Activated CD8-positive, alpha-beta T cell treated with anti-CD3 and anti-CD28 coated beads for 36 hours (primary cell): ENCODE measurements at regions of chr11 and their contacts with region 1.

Region 1: DNA sequence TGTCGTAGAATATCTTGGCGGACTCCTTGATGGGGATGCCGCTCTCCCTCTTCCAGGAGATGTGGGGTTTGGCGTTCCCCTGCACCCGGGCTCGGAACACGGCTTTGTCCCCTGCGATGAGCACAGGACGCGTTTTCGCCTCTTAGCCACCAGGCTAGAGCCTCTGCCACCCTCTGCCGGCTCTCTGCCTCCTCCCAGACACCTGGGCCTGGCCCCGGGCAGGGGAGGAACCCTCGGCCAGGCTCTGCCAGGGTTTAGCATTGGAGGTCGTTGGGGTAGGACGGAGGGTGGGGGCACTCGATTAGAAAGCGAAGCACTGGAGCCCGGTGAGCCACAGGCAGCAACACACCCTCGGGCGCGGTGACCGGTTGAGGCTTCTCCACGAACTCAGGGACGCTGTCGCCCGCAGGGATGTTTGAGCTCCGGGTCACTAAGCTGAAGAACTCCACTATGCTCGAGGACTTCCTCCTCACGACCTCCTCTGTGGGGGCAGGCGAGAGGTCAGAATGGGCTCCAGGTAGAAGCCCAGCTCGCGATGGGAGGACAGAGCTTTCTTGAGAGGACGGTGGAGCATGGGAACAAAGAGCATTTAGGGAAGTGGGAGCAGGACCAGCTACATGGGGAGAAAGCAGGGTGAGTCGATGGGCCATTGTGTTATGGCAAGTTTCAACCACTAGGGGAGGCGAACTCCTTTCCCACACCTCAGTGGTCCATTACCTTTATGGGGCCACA is 4.3 kb downstream of the IGSF22 start:
- DNase-seq: peak; percentile 71
- ATAC-seq: peak; percentile 66
- H3K4me3 Mint-ChIP-seq: peak overlapping the region; percentile 76
- H3K27ac Mint-ChIP-seq: peak overlapping the region; percentile 67
- H3K4me1 Mint-ChIP-seq: no peaks in the 10 kb centered on the region
- H3K27me3 Mint-ChIP-seq: no peaks in the 10 kb centered on the region
- CTCF ChIP-seq: peak; percentile 94

Region 2: GRCh38 chr11:18540207-18541009 is 181.3 kb before region 1 on chr11:
- CTCF ChIA-PET with region 1: interaction called, 20 read pairs
- POLR2A ChIA-PET with region 1: no interaction called
- intact Hi-C with region 1: no loop called
- DNase-seq: no peak
- ATAC-seq: peak; percentile 78
- H3K4me3 Mint-ChIP-seq: no peak overlapping the region
- H3K27ac Mint-ChIP-seq: no peak overlapping the region
- H3K4me1 Mint-ChIP-seq: no peaks in the 10 kb centered on the region
- H3K27me3 Mint-ChIP-seq: no peaks in the 10 kb centered on the region
- CTCF ChIP-seq: peak; percentile 70

Region 3: GRCh38 chr11:18564149-18564548 is 157.6 kb before region 1 on chr11:
- CTCF ChIA-PET with region 1: no interaction called
- POLR2A ChIA-PET with region 1: no interaction called
- intact Hi-C with region 1: no loop called
- DNase-seq: no peak
- ATAC-seq: no peak
- H3K4me3 Mint-ChIP-seq: no peak overlapping the region
- H3K27ac Mint-ChIP-seq: no peak overlapping the region
- H3K4me1 Mint-ChIP-seq: no peaks in the 10 kb centered on the region
- H3K27me3 Mint-ChIP-seq: no peaks in the 10 kb centered on the region
- CTCF ChIP-seq: no peak

Region 4: DNA sequence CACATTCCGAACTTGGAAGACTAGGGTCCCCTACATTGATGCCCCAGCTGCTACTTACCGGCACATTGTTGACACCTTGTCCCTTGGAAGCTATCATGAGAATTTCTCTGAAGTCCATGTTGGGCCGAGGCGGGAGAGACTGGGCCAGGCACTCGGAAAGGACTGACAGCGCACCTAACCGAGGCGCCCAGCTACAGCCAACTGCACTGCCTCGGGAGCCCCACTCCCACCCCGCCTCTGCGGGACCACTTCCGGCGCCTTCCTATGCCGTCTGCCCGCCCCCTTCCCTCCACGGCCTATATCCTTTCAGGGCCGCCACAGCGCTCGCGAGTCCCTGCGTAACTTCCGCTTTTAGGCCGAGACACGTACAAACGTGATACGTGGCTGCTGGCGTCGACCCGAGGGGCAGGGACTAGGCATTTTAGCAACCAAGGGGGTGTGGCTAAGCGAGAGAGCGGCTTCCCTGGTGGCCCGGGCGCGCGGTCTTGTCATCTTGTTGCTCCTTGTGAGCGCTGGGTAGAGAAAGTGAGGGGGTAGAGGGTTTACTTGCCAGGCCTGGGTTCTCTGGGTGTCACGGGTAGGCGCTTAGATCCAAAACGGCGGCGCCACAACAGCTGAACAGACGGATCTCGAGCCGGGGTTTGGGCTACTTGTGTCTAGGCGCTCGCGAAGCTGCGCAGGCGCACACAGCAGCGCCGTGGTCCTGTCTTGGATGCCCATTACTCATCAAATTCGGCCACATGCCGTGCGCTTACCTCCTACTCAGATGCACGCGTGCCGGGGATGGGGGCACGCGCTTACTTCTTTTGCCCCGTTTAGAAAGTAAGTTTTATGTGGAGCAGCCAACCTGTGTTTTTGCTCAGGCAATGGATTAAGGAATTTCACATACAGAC is 87.3 kb before region 1 on chr11 and contains the start of gene SPTY2D1:
- CTCF ChIA-PET with region 1: interaction called, 22 read pairs
- POLR2A ChIA-PET with region 1: interaction called, 4 read pairs
- intact Hi-C with region 1: no loop called
- DNase-seq: peak; percentile 100
- ATAC-seq: peak; percentile 98
- H3K4me3 Mint-ChIP-seq: peak within 1 kb of the TSS; percentile 89
- H3K27ac Mint-ChIP-seq: peak within 1 kb of the TSS; percentile 97
- H3K4me1 Mint-ChIP-seq: peaks cover 21% of the 10 kb centered on the region
- H3K27me3 Mint-ChIP-seq: no peaks in the 10 kb centered on the region
- CTCF ChIP-seq: no peak
- total RNA-seq, gene SPTY2D1: 21.3 TPM

Region 5: GRCh38 chr11:18706330-18707243 is 15.1 kb before region 1 on chr11:
- CTCF ChIA-PET with region 1: interaction called, 51 read pairs
- POLR2A ChIA-PET with region 1: interaction called, 4 read pairs
- intact Hi-C with region 1: no loop called
- DNase-seq: peak; percentile 63
- ATAC-seq: peak; percentile 81
- H3K4me3 Mint-ChIP-seq: peak overlapping the region; percentile 69
- H3K27ac Mint-ChIP-seq: peak overlapping the region; percentile 81
- H3K4me1 Mint-ChIP-seq: peaks cover 17% of the 10 kb centered on the region
- H3K27me3 Mint-ChIP-seq: peaks cover 1% of the 10 kb centered on the region
- CTCF ChIP-seq: no peak

Region 6: DNA sequence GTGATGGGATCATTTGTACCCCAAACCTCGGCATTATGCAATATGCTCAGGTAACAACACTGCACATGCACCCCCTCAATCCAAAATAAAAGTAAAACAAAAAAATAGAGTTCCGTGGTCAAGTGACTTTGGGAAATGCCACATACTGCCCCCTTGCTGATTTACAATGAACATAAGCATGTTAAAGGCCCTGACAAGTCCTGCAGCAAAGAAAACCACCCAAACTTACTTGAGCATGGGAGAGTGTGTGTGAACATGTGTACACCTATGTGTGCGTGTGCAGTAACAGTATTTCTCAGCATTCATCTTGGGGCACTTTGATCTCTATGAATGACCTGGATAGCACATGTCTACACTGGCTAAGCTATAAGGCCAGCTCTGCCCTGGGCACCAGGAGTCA is 20.1 kb after region 1 on chr11:
- CTCF ChIA-PET with region 1: interaction called, 15 read pairs
- POLR2A ChIA-PET with region 1: no interaction called
- intact Hi-C with region 1: no loop called
- DNase-seq: no peak
- ATAC-seq: no peak
- H3K4me3 Mint-ChIP-seq: no peak overlapping the region
- H3K27ac Mint-ChIP-seq: no peak overlapping the region
- H3K4me1 Mint-ChIP-seq: no peaks in the 10 kb centered on the region
- H3K27me3 Mint-ChIP-seq: no peaks in the 10 kb centered on the region
- CTCF ChIP-seq: no peak